ENCODE measurements at regions of chr7 and their contacts with region 1.

Region 1: GRCh38 chr7:131272086-131272485 is 55.6 kb upstream of the MKLN1 start:
- DNase-seq: no peak
- ATAC-seq: peak in 2 of 8 donors; percentile 12 to 28
- H3K4me3 ChIP-seq: no peak overlapping the region
- H3K27ac ChIP-seq: peak overlapping the region in 1 of 10 donors; percentile 75
- H3K4me1 ChIP-seq: peaks cover 0 to 20% (median 12%) of the 10 kb centered on the region in 9 donors
- H3K27me3 ChIP-seq: no peaks in the 10 kb centered on the region
- CTCF ChIP-seq: no peak

Region 2: GRCh38 chr7:131231381-131232220 is 40.5 kb before region 1 on chr7:
- intact Hi-C with region 1: loop called in 1 of 10 experiments (anchors 5 kb)
- DNase-seq: peak; percentile 23 to 58
- ATAC-seq: peak in 7 of 8 donors; percentile 68 to 83 (median 82)
- H3K4me3 ChIP-seq: peak overlapping the region in 3 of 10 donors; percentile 13 to 35 (median 21)
- H3K27ac ChIP-seq: peak overlapping the region in 9 of 10 donors; percentile 8 to 82 (median 48)
- H3K4me1 ChIP-seq: peaks cover 8 to 40% (median 20%) of the 10 kb centered on the region in 9 donors
- H3K27me3 ChIP-seq: no peaks in the 10 kb centered on the region
- CTCF ChIP-seq: no peak